Gastrocnemius medialis (tissue), 4 donors: ENCODE measurements at regions of chr10 and their contacts with region 1.

Region 1: GRCh38 chr10:73167783-73168464 is at the starts of genes ECD and FAM149B1:
- DNase-seq: peak; percentile 86 to 92
- ATAC-seq: peak; percentile 98
- H3K4me3 ChIP-seq: peak within 1 kb of the TSS; percentile 78 to 96 (median 83)
- H3K27ac ChIP-seq: peak within 1 kb of the TSS; percentile 93 to 97 (median 94)
- H3K4me1 ChIP-seq: peaks cover 26 to 37% of the 10 kb centered on the region in 2 donors
- H3K27me3 ChIP-seq: no peaks in the 10 kb centered on the region
- CTCF ChIP-seq: peak; percentile 28 to 62 (median 42)
- POLR2A ChIP-seq: peak; percentile 92 to 96
- total RNA-seq, gene ECD: 11.0 to 22.8 (median 18.6) TPM
- total RNA-seq, gene FAM149B1: 2.2 to 6.9 (median 5.6) TPM

Region 2: GRCh38 chr10:72364239-72364777 is 803.6 kb before region 1 on chr10:
- in situ Hi-C with region 1: loop called (anchors 25 kb)
- intact Hi-C with region 1: no loop called
- DNase-seq: peak; percentile 66 to 81
- ATAC-seq: peak; percentile 90 to 98
- H3K4me3 ChIP-seq: peak overlapping the region in 2 of 4 donors; percentile 22 to 39
- H3K27ac ChIP-seq: peak overlapping the region in 3 of 4 donors; percentile 13 to 62 (median 34)
- H3K4me1 ChIP-seq: peaks cover 5 to 9% of the 10 kb centered on the region in 2 donors
- H3K27me3 ChIP-seq: no peaks in the 10 kb centered on the region
- CTCF ChIP-seq: peak; percentile 85 to 93 (median 90)
- POLR2A ChIP-seq: no peak

Region 3: DNA sequence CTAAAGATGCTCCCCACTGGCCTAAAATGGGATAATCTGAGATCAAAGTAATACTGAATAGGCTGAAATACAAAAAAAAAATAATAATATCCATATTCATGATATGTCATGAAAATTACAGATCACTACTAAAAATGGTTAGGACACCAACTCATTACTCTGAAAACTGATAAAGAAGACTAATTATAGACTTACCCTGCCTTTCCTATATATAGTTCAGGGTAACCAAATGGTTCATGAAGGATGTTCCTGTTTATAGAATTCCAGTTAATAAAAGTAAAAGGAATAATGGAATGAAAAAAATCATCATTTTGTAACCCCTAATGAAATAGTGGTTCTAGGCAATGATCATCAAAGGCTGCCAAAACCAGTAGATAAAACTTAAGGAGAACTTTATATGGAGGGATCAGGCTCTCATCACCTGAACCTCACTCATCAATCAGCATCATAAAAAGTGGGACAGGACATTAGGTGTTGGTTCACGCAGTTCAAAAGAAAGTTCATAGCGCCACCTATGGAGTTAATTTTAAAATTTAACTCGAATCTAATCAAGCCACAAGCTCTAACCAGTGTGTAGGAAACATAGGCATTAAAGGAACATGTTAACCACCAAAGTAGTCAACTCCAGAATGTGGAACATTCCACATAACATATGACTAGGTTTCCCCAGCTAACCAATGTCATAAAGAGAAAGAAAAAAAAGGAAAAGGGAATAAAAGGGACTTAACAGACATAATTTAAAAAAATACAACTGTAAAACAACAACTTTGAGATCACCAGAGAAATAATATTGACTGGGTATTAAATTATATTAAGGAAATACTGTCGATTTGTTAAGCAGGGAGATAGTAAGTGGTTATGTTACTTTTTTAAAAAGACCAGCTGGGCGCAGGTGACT is 106.9 kb before region 1 on chr10:
- in situ Hi-C with region 1: loop called in 1 of 4 experiments (anchors 25 kb)
- intact Hi-C with region 1: no loop called
- DNase-seq: no peak
- ATAC-seq: peak in 1 of 2 donors; percentile 50
- H3K4me3 ChIP-seq: no peak overlapping the region
- H3K27ac ChIP-seq: peak overlapping the region; percentile 1 to 39 (median 10)
- H3K4me1 ChIP-seq: peaks cover 4 to 11% of the 10 kb centered on the region in 2 donors
- H3K27me3 ChIP-seq: no peaks in the 10 kb centered on the region
- CTCF ChIP-seq: peak in 2 of 5 experiments; percentile 15 to 43
- POLR2A ChIP-seq: no peak

Region 4: GRCh38 chr10:73096449-73097304 is 71.2 kb before region 1 on chr10 and contains the start of gene P4HA1:
- in situ Hi-C with region 1: loop called in 2 of 4 experiments (anchors 10 kb)
- intact Hi-C with region 1: loop called (anchors 2 kb)
- DNase-seq: peak; percentile 98 to 99
- ATAC-seq: peak; percentile 79 to 82
- H3K4me3 ChIP-seq: peak within 1 kb of the TSS; percentile 83 to 99 (median 94)
- H3K27ac ChIP-seq: peak within 1 kb of the TSS; percentile 91 to 100 (median 96)
- H3K4me1 ChIP-seq: peaks cover 53% of the 10 kb centered on the region in 2 donors
- H3K27me3 ChIP-seq: no peaks in the 10 kb centered on the region
- CTCF ChIP-seq: peak; percentile 70 to 89 (median 78)
- POLR2A ChIP-seq: peak; percentile 98 to 99
- total RNA-seq, gene P4HA1: 65.3 to 348 (median 217) TPM

Region 5: GRCh38 chr10:73131301-73131700 is 36.6 kb before region 1 on chr10:
- in situ Hi-C with region 1: no loop called
- intact Hi-C with region 1: loop called (anchors 5 kb)
- DNase-seq: no peak
- ATAC-seq: no peak
- H3K4me3 ChIP-seq: no peak overlapping the region
- H3K27ac ChIP-seq: peak overlapping the region in 3 of 4 donors; percentile 1 to 20 (median 7)
- H3K4me1 ChIP-seq: no peaks in the 10 kb centered on the region
- H3K27me3 ChIP-seq: no peaks in the 10 kb centered on the region
- CTCF ChIP-seq: no peak
- POLR2A ChIP-seq: no peak

Region 6: GRCh38 chr10:73141603-73142002 is 26.3 kb before region 1 on chr10:
- in situ Hi-C with region 1: no loop called
- intact Hi-C with region 1: no loop called
- DNase-seq: no peak
- ATAC-seq: no peak
- H3K4me3 ChIP-seq: no peak overlapping the region
- H3K27ac ChIP-seq: no peak overlapping the region
- H3K4me1 ChIP-seq: no peaks in the 10 kb centered on the region
- H3K27me3 ChIP-seq: no peaks in the 10 kb centered on the region
- CTCF ChIP-seq: no peak
- POLR2A ChIP-seq: no peak

Region 7: DNA sequence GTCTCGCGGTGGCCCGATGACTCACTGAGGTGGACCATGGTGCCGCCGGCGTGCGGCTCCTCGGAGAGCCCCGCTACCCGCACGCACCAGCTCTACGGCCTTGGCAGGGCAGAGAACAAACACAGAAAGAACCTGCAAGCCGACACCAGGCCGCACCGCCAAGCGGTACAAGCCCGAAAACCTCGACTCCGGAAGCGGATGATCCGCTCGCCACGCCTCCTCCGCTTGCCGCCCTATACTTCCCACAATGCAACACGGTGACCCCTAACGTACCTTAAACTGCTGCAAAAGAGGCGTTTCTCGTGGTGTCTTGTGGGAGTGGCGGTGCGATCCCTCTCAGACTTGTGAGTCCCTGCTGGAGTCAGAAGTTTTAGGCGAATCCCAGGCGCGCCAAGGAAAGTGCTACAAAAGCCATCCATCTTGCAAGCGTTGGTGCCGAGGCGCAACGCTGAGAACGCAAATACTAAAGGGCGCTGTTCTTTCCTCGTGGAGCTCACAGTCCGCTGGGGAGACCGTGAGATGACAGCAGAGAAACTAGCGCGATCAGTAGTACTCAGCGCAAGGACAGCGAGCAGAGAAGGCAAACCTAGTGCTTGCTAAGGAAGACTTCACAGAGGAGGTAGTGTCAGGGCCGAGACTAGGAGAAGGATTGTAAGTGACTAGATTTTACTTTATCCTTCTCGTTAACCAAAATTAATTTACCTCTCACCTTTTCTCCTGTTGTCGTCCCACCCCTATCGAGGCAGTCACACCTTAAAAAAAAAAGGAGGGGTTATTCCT is 84.7 kb after region 1 on chr10 and contains the start of gene MRPS16:
- in situ Hi-C with region 1: no loop called
- intact Hi-C with region 1: loop called (anchors 1 kb)
- DNase-seq: peak; percentile 94 to 97
- ATAC-seq: peak; percentile 99
- H3K4me3 ChIP-seq: peak within 1 kb of the TSS; percentile 78 to 98 (median 88)
- H3K27ac ChIP-seq: peak within 1 kb of the TSS; percentile 89 to 99 (median 96)
- H3K4me1 ChIP-seq: peaks cover 30 to 31% of the 10 kb centered on the region in 2 donors
- H3K27me3 ChIP-seq: no peaks in the 10 kb centered on the region
- CTCF ChIP-seq: no peak
- POLR2A ChIP-seq: peak; percentile 72 to 74
- total RNA-seq, gene MRPS16: 73.2 to 104 (median 79.6) TPM